ENCODE measurements at regions of chr10 and their contacts with region 1.

Region 1: DNA sequence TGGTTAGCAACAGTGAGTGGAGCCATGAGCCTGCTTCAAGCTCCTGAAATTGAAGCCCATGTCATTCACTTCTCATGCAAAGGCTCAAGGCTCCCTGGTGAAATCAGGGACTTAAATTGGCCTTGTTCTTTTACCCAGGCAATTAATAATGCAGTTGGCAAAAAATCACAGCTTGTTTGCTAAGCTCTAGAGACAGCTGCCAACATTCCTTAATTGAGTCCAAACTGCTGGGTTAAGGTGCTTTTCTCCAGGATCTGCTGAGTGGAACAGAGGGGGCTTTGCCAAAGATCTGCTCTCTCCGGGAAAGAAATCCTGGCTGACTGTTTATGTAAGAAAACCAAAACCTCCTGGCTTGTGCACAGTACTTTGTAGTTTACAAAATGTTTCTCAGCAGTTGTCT is 257.6 kb upstream of the GHITM start:
- DNase-seq: no peak
- ATAC-seq: no peak
- H3K4me3 Mint-ChIP-seq: no peak overlapping the region
- H3K27ac Mint-ChIP-seq: no peak overlapping the region
- H3K4me1 Mint-ChIP-seq: no peaks in the 10 kb centered on the region
- H3K27me3 Mint-ChIP-seq: peaks cover 7% of the 10 kb centered on the region

Region 2: GRCh38 chr10:83562381-83562780 is 319.3 kb before region 1 on chr10:
- CTCF ChIA-PET with region 1: no interaction called
- POLR2A ChIA-PET with region 1: no interaction called
- DNase-seq: no peak
- ATAC-seq: no peak
- H3K4me3 Mint-ChIP-seq: no peak overlapping the region
- H3K27ac Mint-ChIP-seq: no peak overlapping the region
- H3K4me1 Mint-ChIP-seq: no peaks in the 10 kb centered on the region
- H3K27me3 Mint-ChIP-seq: no peaks in the 10 kb centered on the region

Region 3: DNA sequence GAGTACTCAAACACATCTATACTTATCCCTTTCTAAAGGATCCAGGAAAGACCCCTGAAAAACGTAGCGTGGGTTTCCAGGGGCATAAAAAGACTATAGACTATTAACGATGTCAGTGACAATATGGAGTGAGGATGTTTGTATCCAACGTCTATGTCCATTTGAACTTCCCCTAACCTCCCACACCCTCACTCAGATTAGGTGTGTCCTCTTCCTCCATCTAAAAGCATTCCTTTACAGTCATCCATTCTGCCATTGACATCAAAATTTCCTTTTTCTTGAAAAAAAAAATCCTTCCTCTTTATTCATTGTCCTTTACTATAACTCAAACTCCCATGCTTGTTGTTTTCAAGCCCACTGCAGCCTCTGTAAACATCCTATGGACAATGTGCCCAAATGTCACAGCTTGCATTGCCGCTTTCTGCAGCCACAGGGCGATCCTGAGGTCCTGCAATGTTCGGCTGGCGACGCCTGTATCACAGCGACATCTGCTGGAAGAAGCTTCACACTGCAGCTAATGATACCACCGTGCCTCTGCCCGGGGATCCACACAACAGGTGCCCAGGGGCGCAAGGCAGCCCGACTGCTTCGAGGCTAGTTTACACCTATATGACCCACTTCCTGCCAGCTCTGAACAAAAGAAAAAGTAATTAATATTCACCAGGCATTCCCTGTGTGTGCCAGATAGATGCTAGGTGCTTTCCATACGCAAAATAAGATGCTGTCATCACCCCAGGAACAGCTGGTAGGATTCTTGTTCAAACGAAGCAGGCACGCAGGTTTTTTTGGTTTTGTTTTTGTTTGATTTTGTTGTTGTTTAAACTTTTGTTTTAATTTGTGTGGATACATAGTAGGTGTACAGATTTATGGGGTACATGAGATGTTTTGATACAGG is 10.2 kb before region 1 on chr10:
- CTCF ChIA-PET with region 1: interaction called, 20 read pairs
- POLR2A ChIA-PET with region 1: no interaction called
- DNase-seq: peak; percentile 68
- ATAC-seq: peak; percentile 83
- H3K4me3 Mint-ChIP-seq: no peak overlapping the region
- H3K27ac Mint-ChIP-seq: no peak overlapping the region
- H3K4me1 Mint-ChIP-seq: no peaks in the 10 kb centered on the region
- H3K27me3 Mint-ChIP-seq: no peaks in the 10 kb centered on the region